ENCODE measurements at regions of chr12 and their contacts with region 1.

Region 1: GRCh38 chr12:124940549-124941527 is 26.4 kb upstream of the UBC start:
- DNase-seq: peak; percentile 76 to 87 (median 77)
- H3K4me3 ChIP-seq: peak overlapping the region; percentile 73 to 82
- H3K4me3 Mint-ChIP-seq: no peak overlapping the region
- H3K27ac ChIP-seq: peak overlapping the region; percentile 54
- H3K27ac Mint-ChIP-seq: peak overlapping the region in 1 of 7 donors; percentile 29
- H3K4me1 ChIP-seq: peaks cover 30% of the 10 kb centered on the region
- H3K4me1 Mint-ChIP-seq: peaks cover 0 to 9% (median 6%) of the 10 kb centered on the region in 4 donors
- H3K27me3 ChIP-seq: no peaks in the 10 kb centered on the region
- H3K27me3 Mint-ChIP-seq: no peaks in the 10 kb centered on the region

Region 2: DNA sequence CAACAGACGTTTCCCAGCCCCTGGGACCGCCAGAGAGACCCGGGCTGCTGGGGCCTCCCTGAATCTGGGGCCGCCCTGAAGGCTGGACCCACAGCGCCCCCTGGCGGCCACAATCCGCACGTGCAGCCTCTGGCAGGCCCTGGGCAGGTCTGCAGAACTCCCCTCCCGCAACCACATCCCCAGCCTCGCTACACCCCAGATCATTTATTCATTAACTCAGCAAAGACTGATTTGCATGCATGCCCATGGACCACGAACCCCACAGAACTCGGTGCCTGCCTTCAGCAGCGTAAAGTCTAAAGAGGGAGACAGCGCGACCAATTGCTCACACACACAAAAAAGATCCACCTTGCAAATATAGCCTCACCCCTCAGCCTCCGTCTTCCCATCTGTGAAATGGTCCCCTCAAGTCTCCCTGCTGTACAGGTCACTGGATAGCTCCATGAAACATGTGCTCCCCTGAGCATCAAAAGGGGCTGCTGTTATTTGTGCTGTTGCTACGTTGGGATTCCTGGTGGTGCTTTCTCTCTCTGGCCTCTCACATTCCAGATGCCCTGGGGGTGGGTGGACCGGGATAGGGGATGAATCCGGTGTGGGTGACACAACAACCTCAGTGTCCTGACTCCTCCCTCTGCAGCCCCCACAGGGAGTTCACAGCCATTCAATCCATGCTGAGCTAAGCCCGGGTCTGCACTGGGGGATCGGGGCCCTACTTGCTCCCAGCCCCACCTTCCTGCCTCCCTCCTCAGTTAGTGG is 173.6 kb before region 1 on chr12:
- CTCF ChIA-PET with region 1: no interaction called
- POLR2A ChIA-PET with region 1: no interaction called
- intact Hi-C with region 1: no loop called
- DNase-seq: peak; percentile 75 to 81 (median 76)
- H3K4me3 ChIP-seq: no peak overlapping the region
- H3K4me3 Mint-ChIP-seq: peak overlapping the region in 2 of 8 donors; percentile 40 to 48
- H3K27ac ChIP-seq: no peak overlapping the region
- H3K27ac Mint-ChIP-seq: peak overlapping the region in 2 of 7 donors; percentile 10 to 74
- H3K4me1 ChIP-seq: peaks cover 9% of the 10 kb centered on the region
- H3K4me1 Mint-ChIP-seq: peaks cover 9 to 16% (median 12%) of the 10 kb centered on the region in 4 donors
- H3K27me3 ChIP-seq: no peaks in the 10 kb centered on the region
- H3K27me3 Mint-ChIP-seq: peaks cover 6 to 10% of the 10 kb centered on the region in 2 donors

Region 3: DNA sequence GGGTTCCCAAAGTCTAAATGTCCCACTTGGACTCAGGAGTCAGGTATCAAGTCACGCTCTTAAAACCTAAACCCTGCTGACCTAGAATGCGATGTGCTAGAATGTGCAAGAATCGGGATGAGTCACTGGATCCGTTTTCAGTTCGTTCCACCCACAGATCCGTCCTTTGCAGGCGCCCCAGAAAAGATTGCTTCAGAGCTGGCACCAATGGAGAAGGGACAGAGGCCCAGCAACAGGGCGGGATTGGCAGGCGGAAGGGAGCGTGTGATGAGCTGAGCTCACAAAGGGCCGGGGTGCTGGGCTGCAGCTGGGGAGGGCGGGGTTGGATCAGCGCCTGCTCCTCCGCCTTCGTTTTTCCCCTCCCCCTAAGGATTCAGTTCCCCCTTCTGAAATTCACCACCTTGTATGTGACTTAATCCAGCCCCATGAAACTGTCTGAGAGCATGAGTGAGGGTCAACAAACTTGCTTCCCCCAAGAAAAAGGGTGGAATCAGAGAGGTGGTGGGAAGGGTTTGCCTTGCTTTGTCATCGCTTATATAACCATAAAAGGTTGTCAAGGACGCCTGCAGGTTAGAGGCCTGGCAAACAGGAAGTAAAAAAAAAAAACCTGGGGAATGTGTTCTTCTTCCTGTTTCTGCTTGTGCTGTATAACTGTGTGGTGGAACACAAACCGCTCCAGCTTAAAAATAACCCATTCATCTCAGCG is 23.6 kb before region 1 on chr12:
- CTCF ChIA-PET with region 1: interaction called, 898 read pairs
- POLR2A ChIA-PET with region 1: interaction called, 836 read pairs
- intact Hi-C with region 1: loop called (anchors 1 kb)
- DNase-seq: peak; percentile 94 to 98 (median 96)
- H3K4me3 ChIP-seq: peak overlapping the region; percentile 39 to 53
- H3K4me3 Mint-ChIP-seq: peak overlapping the region; percentile 82 to 99 (median 87)
- H3K27ac ChIP-seq: peak overlapping the region; percentile 84
- H3K27ac Mint-ChIP-seq: peak overlapping the region; percentile 95 to 100 (median 97)
- H3K4me1 ChIP-seq: peaks cover 81% of the 10 kb centered on the region
- H3K4me1 Mint-ChIP-seq: peaks cover 70 to 98% (median 83%) of the 10 kb centered on the region in 4 donors
- H3K27me3 ChIP-seq: no peaks in the 10 kb centered on the region
- H3K27me3 Mint-ChIP-seq: peaks cover 2 to 9% of the 10 kb centered on the region in 2 donors

Measured in CD4-positive, alpha-beta memory T cell (primary cell).